ENCODE measurements at regions of chr3 and their contacts with region 1.

Region 1: GRCh38 chr3:111539351-111540331 is 2.4 kb upstream of the CD96 start:
- DNase-seq: peak; percentile 89
- H3K4me3 Mint-ChIP-seq: peak overlapping the region; percentile 79
- H3K27ac Mint-ChIP-seq: peak overlapping the region; percentile 89
- H3K4me1 Mint-ChIP-seq: peaks cover 74% of the 10 kb centered on the region
- H3K27me3 Mint-ChIP-seq: no peaks in the 10 kb centered on the region

Region 2: DNA sequence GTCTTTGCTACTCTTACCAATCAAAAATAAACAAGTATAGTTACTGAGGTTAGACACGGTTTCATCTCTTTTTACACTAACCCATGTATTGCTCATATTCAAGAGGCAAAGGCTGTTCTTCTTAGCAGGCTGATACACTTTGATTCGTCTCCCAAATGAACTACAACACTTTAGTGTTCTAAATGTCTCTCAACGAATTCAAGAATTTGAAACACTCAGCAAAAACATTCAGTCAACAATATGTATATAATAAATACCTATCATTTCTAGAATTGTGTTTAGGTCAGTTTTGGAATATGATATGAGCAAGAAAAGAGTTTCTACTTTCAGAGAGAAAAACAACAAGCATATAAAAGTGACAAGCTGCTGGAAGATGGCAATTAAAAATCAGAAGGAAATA is 1532.7 kb before region 1 on chr3:
- intact Hi-C with region 1: no loop called
- DNase-seq: no peak
- H3K4me3 Mint-ChIP-seq: no peak overlapping the region
- H3K27ac Mint-ChIP-seq: no peak overlapping the region
- H3K4me1 Mint-ChIP-seq: no peaks in the 10 kb centered on the region
- H3K27me3 Mint-ChIP-seq: no peaks in the 10 kb centered on the region

Region 3: GRCh38 chr3:110814170-110815007 is 725.3 kb before region 1 on chr3:
- intact Hi-C with region 1: loop called (anchors 2 kb)
- DNase-seq: peak; percentile 71
- H3K4me3 Mint-ChIP-seq: peak overlapping the region; percentile 17
- H3K27ac Mint-ChIP-seq: peak overlapping the region; percentile 56
- H3K4me1 Mint-ChIP-seq: peaks cover 10% of the 10 kb centered on the region
- H3K27me3 Mint-ChIP-seq: peaks cover 19% of the 10 kb centered on the region

Region 4: DNA sequence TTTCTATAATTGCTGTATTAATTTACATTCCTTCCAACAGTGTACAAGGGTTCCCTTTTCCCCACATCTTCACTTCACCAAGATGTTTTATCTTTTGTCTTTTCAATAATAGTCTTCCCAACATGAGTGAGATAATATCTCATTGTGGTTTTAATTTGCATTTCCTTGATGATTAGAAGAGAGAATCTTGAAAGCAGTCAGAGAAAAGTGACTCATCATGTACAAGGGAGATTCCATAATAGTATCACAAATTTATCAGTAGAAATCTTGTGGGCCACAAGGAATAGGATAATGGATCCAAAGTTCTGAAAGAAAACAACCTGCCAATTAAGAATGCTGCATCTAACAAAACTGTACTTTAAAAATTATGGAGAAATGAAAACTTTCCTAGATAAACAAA is 278.8 kb before region 1 on chr3:
- intact Hi-C with region 1: loop called (anchors 2 kb)
- DNase-seq: no peak
- H3K4me3 Mint-ChIP-seq: no peak overlapping the region
- H3K27ac Mint-ChIP-seq: peak overlapping the region; percentile 31
- H3K4me1 Mint-ChIP-seq: peaks cover 19% of the 10 kb centered on the region
- H3K27me3 Mint-ChIP-seq: peaks cover 23% of the 10 kb centered on the region

Region 5: GRCh38 chr3:111338059-111338698 is 201.5 kb before region 1 on chr3:
- intact Hi-C with region 1: loop called (anchors 1 kb)
- DNase-seq: peak; percentile 84
- H3K4me3 Mint-ChIP-seq: no peak overlapping the region
- H3K27ac Mint-ChIP-seq: no peak overlapping the region
- H3K4me1 Mint-ChIP-seq: peaks cover 24% of the 10 kb centered on the region
- H3K27me3 Mint-ChIP-seq: peaks cover 2% of the 10 kb centered on the region

Region 6: GRCh38 chr3:111650378-111651275 is 111.0 kb after region 1 on chr3:
- intact Hi-C with region 1: no loop called
- DNase-seq: no peak
- H3K4me3 Mint-ChIP-seq: no peak overlapping the region
- H3K27ac Mint-ChIP-seq: no peak overlapping the region
- H3K4me1 Mint-ChIP-seq: peaks cover 10% of the 10 kb centered on the region
- H3K27me3 Mint-ChIP-seq: no peaks in the 10 kb centered on the region

Region 7: GRCh38 chr3:111668912-111669488 is 129.4 kb after region 1 on chr3:
- intact Hi-C with region 1: loop called (anchors 2 kb)
- DNase-seq: peak; percentile 69
- H3K4me3 Mint-ChIP-seq: peak overlapping the region; percentile 22
- H3K27ac Mint-ChIP-seq: peak overlapping the region; percentile 73
- H3K4me1 Mint-ChIP-seq: peaks cover 69% of the 10 kb centered on the region
- H3K27me3 Mint-ChIP-seq: no peaks in the 10 kb centered on the region

Region 8: DNA sequence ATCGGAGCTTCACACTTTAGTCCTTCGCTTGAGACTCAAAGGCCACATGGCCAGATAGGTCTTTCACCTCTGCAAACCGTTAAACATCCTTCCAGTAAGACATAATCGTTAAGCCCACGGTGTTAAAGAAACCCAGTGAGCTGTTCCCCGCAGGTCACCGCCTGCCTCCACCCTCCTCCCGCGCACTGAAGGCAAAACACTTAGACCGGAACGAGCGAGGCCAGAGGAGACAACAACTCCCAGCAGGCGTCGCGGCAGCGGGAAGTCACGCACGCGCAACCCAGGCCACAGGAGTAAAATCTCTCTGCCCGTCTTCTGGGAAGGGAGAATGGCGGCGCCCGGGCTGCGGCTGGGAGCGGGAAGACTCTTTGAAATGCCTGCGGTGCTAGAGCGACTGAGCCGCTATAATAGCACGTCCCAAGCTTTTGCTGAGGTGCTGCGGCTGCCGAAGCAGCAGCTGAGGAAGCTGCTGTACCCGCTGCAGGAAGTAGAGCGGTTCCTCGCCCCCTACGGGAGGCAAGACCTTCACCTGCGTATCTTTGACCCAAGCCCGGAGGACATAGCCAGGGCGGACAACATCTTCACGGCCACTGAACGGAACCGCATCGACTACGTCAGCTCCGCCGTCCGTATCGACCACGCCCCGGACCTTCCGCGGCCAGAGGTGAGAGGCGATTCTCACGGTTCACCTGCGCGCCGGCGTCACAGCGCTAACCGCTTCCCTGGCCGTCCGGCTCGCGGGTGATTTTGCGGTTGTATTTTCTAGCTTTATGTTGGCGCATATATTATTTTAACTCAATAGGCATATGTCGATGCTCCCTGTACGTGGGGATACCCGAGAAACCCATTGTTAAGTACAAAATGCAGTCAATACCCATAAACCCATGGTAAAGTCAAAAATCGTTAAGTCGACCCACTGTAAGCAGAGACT is 1451.3 kb after region 1 on chr3 and contains the start of gene GTPBP8:
- intact Hi-C with region 1: loop called (anchors 10 kb)
- DNase-seq: peak; percentile 95
- H3K4me3 Mint-ChIP-seq: peak within 1 kb of the TSS; percentile 88
- H3K27ac Mint-ChIP-seq: peak within 1 kb of the TSS; percentile 97
- H3K4me1 Mint-ChIP-seq: peaks cover 56% of the 10 kb centered on the region
- H3K27me3 Mint-ChIP-seq: no peaks in the 10 kb centered on the region
- total RNA-seq, gene GTPBP8: 18.4 and 18.9 TPM in 2 replicates